ENCODE measurements at regions of chr12 and their contacts with region 1.

Region 1: DNA sequence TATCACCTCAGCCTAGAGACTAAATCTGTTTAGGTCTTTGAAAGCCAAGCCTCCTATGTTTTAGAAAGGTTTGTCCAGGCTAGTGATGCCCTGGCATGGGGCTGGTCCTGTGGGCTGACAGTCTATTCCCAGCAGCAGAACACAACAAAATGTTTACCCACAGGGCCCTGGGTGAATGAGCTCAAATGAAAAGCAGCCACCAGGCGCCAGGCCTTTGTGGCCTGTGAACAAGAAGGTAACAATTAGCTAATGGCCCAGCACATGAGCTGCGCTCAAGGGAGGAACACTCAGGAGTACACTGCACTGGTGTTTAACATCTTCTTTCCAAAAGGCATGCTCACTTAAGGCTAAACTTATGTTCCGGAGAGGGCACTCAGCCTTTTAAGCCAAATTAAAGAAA is 202.2 kb downstream of the MON2 start:
- DNase-seq: no peak
- H3K4me3 Mint-ChIP-seq: no peak overlapping the region
- H3K27ac Mint-ChIP-seq: no peak overlapping the region
- H3K4me1 Mint-ChIP-seq: no peaks in the 10 kb centered on the region
- H3K27me3 Mint-ChIP-seq: peaks cover 13% of the 10 kb centered on the region

Region 2: GRCh38 chr12:62834971-62835547 is 166.3 kb after region 1 on chr12:
- intact Hi-C with region 1: no loop called
- DNase-seq: no peak
- H3K4me3 Mint-ChIP-seq: no peak overlapping the region
- H3K27ac Mint-ChIP-seq: no peak overlapping the region
- H3K4me1 Mint-ChIP-seq: no peaks in the 10 kb centered on the region
- H3K27me3 Mint-ChIP-seq: peaks cover 10% of the 10 kb centered on the region

Region 3: GRCh38 chr12:63770375-63770774 is 1101.6 kb after region 1 on chr12:
- intact Hi-C with region 1: loop called (anchors 5 kb)
- DNase-seq: no peak
- H3K4me3 Mint-ChIP-seq: no peak overlapping the region
- H3K27ac Mint-ChIP-seq: no peak overlapping the region
- H3K4me1 Mint-ChIP-seq: no peaks in the 10 kb centered on the region
- H3K27me3 Mint-ChIP-seq: peaks cover 14% of the 10 kb centered on the region

Measured in activated T-helper 1 cell treated with anti-CD3 and anti-CD28 coated beads, Interleukin-12 subunit alpha, Interleukin-12 subunit beta, Interleukin-2, Interleukin-4 antibody, amounts not matched to agents 30 ng/mL and 10 ng/mL and 1 ng/mL, durations not matched to agents 14 hours and 24 hours and 36 hours (primary cell).